Spleen (tissue), 13 donors: ENCODE measurements at regions of chr9 and their contacts with region 1.

Region 1: GRCh38 chr9:91361291-91362050 is at the start of gene AUH:
- DNase-seq: peak; percentile 97
- H3K4me3 ChIP-seq: peak within 1 kb of the TSS; percentile 95 to 100 (median 98)
- H3K27ac ChIP-seq: peak within 1 kb of the TSS; percentile 81 to 96 (median 94)
- H3K4me1 ChIP-seq: peaks cover 17 to 49% (median 42%) of the 10 kb centered on the region in 6 donors
- H3K27me3 ChIP-seq: no peaks in the 10 kb centered on the region
- CTCF ChIP-seq: peak in 6 of 11 experiments; percentile 14 to 37 (median 20)
- POLR2A ChIP-seq: peak in 1 of 3 donors; percentile 58
- total RNA-seq, gene AUH: 16.3 to 37.3 (median 24.1) TPM

Region 2: DNA sequence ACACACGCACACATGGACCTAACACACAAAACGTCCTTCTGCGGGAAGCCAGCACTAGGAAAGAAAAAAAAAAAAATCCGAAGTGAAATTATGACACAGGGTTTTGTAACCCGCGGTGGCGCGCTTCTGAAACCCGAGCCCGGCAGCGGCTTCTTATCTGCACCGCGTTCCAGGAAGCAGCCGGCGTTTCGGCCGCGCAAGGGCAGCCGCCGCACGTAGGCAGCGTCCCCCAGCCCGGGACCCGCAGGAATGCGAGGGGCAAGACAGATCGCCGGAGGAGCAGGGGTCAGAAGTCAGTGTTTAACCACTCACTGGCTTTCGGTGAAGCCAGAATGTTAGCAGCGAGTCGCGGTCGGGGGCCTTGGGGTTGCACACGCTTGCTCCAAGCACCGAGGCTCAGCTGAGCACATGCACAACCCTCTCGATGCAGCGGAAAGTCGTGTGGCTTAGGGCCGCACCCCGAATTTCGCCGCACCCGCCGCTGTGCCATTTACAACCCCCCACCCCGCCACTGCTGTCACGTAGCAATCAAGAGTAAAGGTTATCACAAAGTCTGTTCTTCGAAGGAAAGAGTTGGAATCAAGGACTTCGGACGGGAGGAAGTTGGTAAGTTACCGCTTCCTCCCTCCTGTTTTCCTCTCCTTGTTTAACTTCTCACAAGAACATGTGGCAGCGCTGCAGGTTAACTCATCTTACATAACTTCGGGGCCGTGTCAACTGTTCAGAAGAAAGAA is 167.6 kb before region 1 on chr9:
- intact Hi-C with region 1: loop called (anchors 10 kb)
- DNase-seq: peak; percentile 95
- H3K4me3 ChIP-seq: peak overlapping the region; percentile 20 to 70 (median 40)
- H3K27ac ChIP-seq: peak overlapping the region; percentile 89 to 95 (median 92)
- H3K4me1 ChIP-seq: peaks cover 11 to 73% (median 49%) of the 10 kb centered on the region in 6 donors
- H3K27me3 ChIP-seq: no peaks in the 10 kb centered on the region
- CTCF ChIP-seq: peak in 2 of 11 experiments; percentile 7 to 22
- POLR2A ChIP-seq: peak in 2 of 3 donors; percentile 5 to 40